GM12878 (cell line): ENCODE measurements at regions of chr4 and their contacts with region 1.

Region 1: GRCh38 chr4:128809477-128810330 is at the start of gene JADE1:
- DNase-seq: no peak
- ATAC-seq: peak; percentile 69
- H3K4me3 ChIP-seq: peak within 1 kb of the TSS; percentile 99
- H3K27ac ChIP-seq: peak within 1 kb of the TSS; percentile 97
- H3K4me1 ChIP-seq: no peaks in the 10 kb centered on the region
- H3K27me3 ChIP-seq: no peaks in the 10 kb centered on the region
- CTCF ChIP-seq: peak; percentile 74 to 95 (median 76)
- EP300 ChIP-seq: no peak
- POLR2A ChIP-seq: peak; percentile 83
- RAD21 ChIP-seq: peak; percentile 80
- polyA plus RNA-seq, gene JADE1: 5.9 to 6.3 TPM

Region 2: DNA sequence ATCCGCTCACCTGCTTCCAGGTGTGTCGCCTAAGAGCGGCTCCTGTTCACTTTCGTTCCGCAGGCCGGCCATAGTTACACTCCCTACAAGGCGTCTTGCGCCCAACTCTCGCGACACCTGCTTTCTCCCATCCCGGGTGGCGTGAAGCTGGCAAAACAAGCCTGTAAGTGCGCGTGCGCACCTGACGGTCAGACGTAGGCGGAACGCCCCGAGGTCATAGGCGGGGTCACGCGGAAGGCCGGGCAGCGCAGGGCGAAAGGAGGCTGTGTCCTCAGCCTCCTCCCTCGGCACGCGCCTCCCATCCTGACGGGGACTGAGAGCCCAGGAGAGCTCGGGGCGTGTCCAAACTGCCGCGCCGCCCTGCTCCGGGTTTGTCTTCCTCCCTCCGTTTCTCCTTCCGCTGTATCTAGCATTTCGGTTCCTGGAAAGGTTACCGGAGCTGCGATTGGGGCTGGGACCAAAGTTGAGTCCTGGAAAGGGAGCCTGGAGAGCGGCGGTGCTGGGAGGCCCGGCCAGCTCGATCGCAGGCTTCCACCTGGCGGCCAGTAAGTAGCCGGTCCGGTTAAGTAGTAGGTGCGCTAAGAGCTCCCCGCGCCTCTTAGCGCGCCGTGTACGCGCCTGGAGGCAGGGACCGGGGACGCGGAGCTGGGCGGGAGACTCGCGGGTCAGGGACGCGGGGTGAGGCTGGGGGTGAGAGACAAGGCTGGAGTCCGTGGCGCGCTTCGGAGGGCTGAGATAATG is 844.5 kb before region 1 on chr4 and contains the starts of genes ABHD18 and MFSD8:
- CTCF ChIA-PET with region 1: no interaction called
- POLR2A ChIA-PET with region 1: no interaction called
- RAD21 ChIA-PET with region 1: no interaction called
- SMC1A ChIA-PET with region 1: no interaction called
- in situ Hi-C with region 1: no loop called
- intact Hi-C with region 1: loop called (anchors 5 kb)
- DNase-seq: peak; percentile 99
- ATAC-seq: peak; percentile 96
- H3K4me3 ChIP-seq: peak within 1 kb of the TSS; percentile 83
- H3K27ac ChIP-seq: peak within 1 kb of the TSS; percentile 89
- H3K4me1 ChIP-seq: peaks cover 5% of the 10 kb centered on the region; the same call in 1 of the 2 replicates
- H3K27me3 ChIP-seq: no peaks in the 10 kb centered on the region
- CTCF ChIP-seq: peak; percentile 38 to 40 (median 39); a peak in 4 of 6 replicates
- EP300 ChIP-seq: 0 out of 4 replicates have a peak, but pooled peaks of 1 of the 2 experiments have one; percentile 9
- POLR2A ChIP-seq: peak; percentile 88
- RAD21 ChIP-seq: 0 out of 2 replicates have a peak, but pooled peaks have one; percentile 15
- polyA plus RNA-seq, gene ABHD18: 3.4 to 3.5 TPM
- polyA plus RNA-seq, gene MFSD8: 18.2 to 29.9 TPM

Region 3: DNA sequence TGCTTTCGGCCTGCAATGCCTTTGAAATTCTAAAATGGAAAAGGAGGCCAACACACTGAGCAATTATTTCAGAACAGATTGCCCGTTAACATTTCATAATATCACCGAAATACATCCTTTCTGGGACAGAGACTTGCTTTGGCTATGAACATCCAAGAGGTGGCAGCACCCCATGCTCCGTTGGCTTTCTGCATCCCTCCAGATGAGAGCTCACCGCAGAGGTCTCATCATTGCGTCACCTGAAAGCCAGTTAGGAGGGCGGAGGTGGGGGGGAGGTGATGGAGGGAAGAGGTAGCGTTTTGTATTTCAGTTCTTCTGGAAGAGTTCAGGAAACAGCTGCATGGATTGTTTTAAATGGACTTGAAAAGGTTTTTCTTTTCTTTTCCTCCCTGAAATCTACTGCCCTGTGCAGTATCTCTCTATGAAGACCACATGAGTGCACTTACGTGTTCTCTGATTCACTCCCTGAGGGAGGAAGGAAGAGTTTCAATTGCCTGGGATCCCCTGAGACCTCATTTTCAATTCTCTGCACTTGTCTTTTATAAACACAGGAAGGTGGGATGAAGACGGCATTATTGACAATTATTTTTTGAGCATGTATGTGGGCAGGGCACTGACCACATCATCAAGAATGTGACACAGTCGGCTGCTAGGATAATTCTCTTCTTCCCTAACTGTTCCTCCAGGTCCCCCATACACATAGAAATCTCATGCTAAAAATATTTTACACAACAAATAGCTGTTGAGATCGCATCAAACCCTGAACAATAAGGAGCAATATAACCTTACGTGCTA is 355.2 kb before region 1 on chr4:
- CTCF ChIA-PET with region 1: interaction called, 8 read pairs
- POLR2A ChIA-PET with region 1: interaction called, 4 read pairs
- RAD21 ChIA-PET with region 1: interaction called, 4 read pairs
- SMC1A ChIA-PET with region 1: interaction called, 3 read pairs
- in situ Hi-C with region 1: loop called (anchors 5 kb)
- intact Hi-C with region 1: loop called (anchors 1 kb)
- DNase-seq: peak; percentile 51
- ATAC-seq: peak; percentile 95
- H3K4me3 ChIP-seq: no peak overlapping the region
- H3K27ac ChIP-seq: no peak overlapping the region
- H3K4me1 ChIP-seq: 0 out of 2 replicates have a peak, but pooled peaks cover 3% of the 10 kb centered on the region
- H3K27me3 ChIP-seq: no peaks in the 10 kb centered on the region
- CTCF ChIP-seq: peak; percentile 84 to 90 (median 86)
- EP300 ChIP-seq: no peak
- POLR2A ChIP-seq: no peak
- RAD21 ChIP-seq: peak; percentile 93

Region 4: GRCh38 chr4:128782076-128782715 is 27.5 kb before region 1 on chr4:
- CTCF ChIA-PET with region 1: interaction called, 13 read pairs
- POLR2A ChIA-PET with region 1: interaction called, 7 read pairs
- RAD21 ChIA-PET with region 1: interaction called, 9 read pairs
- SMC1A ChIA-PET with region 1: interaction called, 11 read pairs
- in situ Hi-C with region 1: no loop called
- intact Hi-C with region 1: loop called (anchors 1 kb)
- DNase-seq: no peak
- ATAC-seq: peak; percentile 88
- H3K4me3 ChIP-seq: no peak overlapping the region
- H3K27ac ChIP-seq: no peak overlapping the region
- H3K4me1 ChIP-seq: no peaks in the 10 kb centered on the region
- H3K27me3 ChIP-seq: no peaks in the 10 kb centered on the region
- CTCF ChIP-seq: peak; percentile 35 to 66 (median 47); a peak in 5 of 6 replicates
- EP300 ChIP-seq: no peak
- POLR2A ChIP-seq: no peak
- RAD21 ChIP-seq: peak; percentile 69

Region 5: DNA sequence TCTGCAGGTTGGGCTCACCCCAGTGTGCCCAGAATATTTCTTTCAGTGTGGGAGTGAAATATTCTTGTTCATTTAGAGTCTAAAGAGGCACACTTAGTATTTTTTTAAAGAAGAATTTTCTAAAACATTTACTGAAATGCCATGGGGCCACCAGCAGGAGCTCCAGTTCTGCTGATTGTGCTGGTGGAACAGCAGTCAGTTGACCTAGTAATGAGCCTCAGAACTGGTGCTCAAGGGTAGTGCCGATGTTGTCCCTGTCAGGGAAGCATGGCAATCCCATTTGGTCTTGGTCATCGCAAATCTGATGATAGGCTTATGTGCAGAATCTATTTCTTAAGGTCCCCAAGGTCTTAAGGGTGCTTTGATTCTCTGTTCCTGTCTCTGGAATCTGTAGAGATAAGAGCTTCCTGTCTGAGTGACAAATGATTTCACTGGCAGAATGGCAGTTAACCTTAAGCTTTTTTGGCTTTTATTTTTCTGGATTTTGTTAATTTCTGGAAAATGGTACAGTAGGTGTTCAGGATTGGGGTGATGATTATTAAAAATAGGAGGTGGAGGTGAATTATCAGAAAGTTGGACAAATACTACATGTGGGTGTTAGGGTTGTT is 31.1 kb after region 1 on chr4:
- CTCF ChIA-PET with region 1: interaction called, 6 read pairs
- POLR2A ChIA-PET with region 1: interaction called, 23 read pairs
- RAD21 ChIA-PET with region 1: interaction called, 21 read pairs
- SMC1A ChIA-PET with region 1: interaction called, 18 read pairs
- in situ Hi-C with region 1: no loop called
- intact Hi-C with region 1: no loop called
- DNase-seq: no peak
- ATAC-seq: no peak
- H3K4me3 ChIP-seq: no peak overlapping the region
- H3K27ac ChIP-seq: no peak overlapping the region
- H3K4me1 ChIP-seq: no peaks in the 10 kb centered on the region
- H3K27me3 ChIP-seq: no peaks in the 10 kb centered on the region
- CTCF ChIP-seq: peak in 1 of 3 experiments; percentile 13; a peak in 1 of 6 replicates
- EP300 ChIP-seq: no peak
- POLR2A ChIP-seq: no peak
- RAD21 ChIP-seq: peak; percentile 34; the same call in 1 of the 2 replicates

Region 6: DNA sequence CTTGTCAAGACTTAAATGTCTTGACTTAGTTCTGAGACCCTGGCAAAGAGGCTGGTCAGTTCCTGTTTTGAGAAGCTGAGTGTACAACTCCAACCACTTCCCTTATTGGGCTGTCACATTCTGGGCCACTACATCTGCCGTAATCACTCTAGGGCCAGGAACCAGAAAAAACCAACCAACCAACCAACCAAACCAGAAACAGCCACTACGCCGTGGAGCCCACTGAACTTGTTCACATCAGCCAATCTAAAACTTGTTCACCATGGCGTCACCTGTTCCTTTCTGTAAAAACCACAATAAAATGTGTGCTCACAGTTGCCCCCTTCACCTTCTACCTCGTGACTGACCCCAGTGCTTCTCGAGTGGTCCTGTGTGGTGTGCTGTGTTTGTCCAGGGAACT is 107.1 kb after region 1 on chr4:
- CTCF ChIA-PET with region 1: no interaction called
- POLR2A ChIA-PET with region 1: interaction called, 3 read pairs
- RAD21 ChIA-PET with region 1: interaction called, 25 read pairs
- SMC1A ChIA-PET with region 1: no interaction called
- in situ Hi-C with region 1: no loop called
- intact Hi-C with region 1: no loop called
- DNase-seq: peak; percentile 84
- ATAC-seq: peak; percentile 94
- H3K4me3 ChIP-seq: no peak overlapping the region
- H3K27ac ChIP-seq: peak overlapping the region; percentile 86
- H3K4me1 ChIP-seq: peaks cover 35% of the 10 kb centered on the region
- H3K27me3 ChIP-seq: no peaks in the 10 kb centered on the region
- CTCF ChIP-seq: no peak
- EP300 ChIP-seq: peak; percentile 39 to 72; a peak in 3 of 4 replicates
- POLR2A ChIP-seq: no peak; the same call in 1 of the 2 replicates
- RAD21 ChIP-seq: 0 out of 2 replicates have a peak, but pooled peaks have one; percentile 6